GM12878 (cell line): ENCODE measurements at regions of chr2 and their contacts with region 1.

Region 1: DNA sequence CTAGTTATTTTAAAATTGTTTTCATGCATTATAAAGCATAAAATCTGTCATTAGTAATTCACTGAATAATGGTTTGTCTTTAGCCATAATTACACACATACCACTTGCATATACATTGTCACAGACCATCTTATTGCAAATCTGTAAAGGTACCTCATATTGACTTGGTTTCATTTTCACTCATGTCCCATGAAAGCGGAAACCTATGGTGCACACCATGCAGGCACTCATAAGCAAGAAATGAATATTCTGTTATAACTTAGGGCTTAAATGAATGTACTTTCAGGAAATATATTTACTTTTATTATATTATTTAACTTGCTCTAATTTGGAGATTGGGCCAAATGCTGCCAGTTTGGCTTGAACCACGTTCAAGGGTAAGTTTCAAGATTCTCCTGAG is 29.2 kb upstream of the STK17B start:
- DNase-seq: peak; percentile 83
- ATAC-seq: peak; percentile 94
- H3K4me3 ChIP-seq: no peak overlapping the region
- H3K27ac ChIP-seq: peak overlapping the region; percentile 79
- H3K4me1 ChIP-seq: peaks cover 18% of the 10 kb centered on the region
- H3K27me3 ChIP-seq: no peaks in the 10 kb centered on the region
- CTCF ChIP-seq: no peak
- EP300 ChIP-seq: peak; percentile 64 to 65
- POLR2A ChIP-seq: no peak
- RAD21 ChIP-seq: no peak

Region 2: GRCh38 chr2:196177124-196177523 is 23.4 kb before region 1 on chr2:
- CTCF ChIA-PET with region 1: interaction called, 13 read pairs
- POLR2A ChIA-PET with region 1: interaction called, 22 read pairs
- RAD21 ChIA-PET with region 1: interaction called, 39 read pairs
- SMC1A ChIA-PET with region 1: interaction called, 104 read pairs
- in situ Hi-C with region 1: no loop called
- intact Hi-C with region 1: loop called (anchors 1 kb)
- DNase-seq: no peak
- ATAC-seq: peak; percentile 6
- H3K4me3 ChIP-seq: peak overlapping the region; percentile 56; the same call in 1 of the 2 replicates
- H3K27ac ChIP-seq: peak overlapping the region; percentile 77
- H3K4me1 ChIP-seq: peaks cover 42% of the 10 kb centered on the region
- H3K27me3 ChIP-seq: no peaks in the 10 kb centered on the region
- CTCF ChIP-seq: no peak
- EP300 ChIP-seq: no peak
- POLR2A ChIP-seq: no peak
- RAD21 ChIP-seq: no peak

Region 3: GRCh38 chr2:196187898-196188458 is 12.6 kb before region 1 on chr2:
- CTCF ChIA-PET with region 1: interaction called, 13 read pairs
- POLR2A ChIA-PET with region 1: interaction called, 22 read pairs
- RAD21 ChIA-PET with region 1: interaction called, 39 read pairs
- SMC1A ChIA-PET with region 1: interaction called, 104 read pairs
- in situ Hi-C with region 1: no loop called
- intact Hi-C with region 1: loop called (anchors 1 kb)
- DNase-seq: no peak
- ATAC-seq: peak; percentile 29; the same call in 2 of the 3 replicates
- H3K4me3 ChIP-seq: no peak overlapping the region
- H3K27ac ChIP-seq: no peak overlapping the region
- H3K4me1 ChIP-seq: peaks cover 7% of the 10 kb centered on the region
- H3K27me3 ChIP-seq: no peaks in the 10 kb centered on the region
- CTCF ChIP-seq: no peak
- EP300 ChIP-seq: 0 out of 4 replicates have a peak, but pooled peaks of 1 of the 2 experiments have one; percentile 14
- POLR2A ChIP-seq: no peak
- RAD21 ChIP-seq: no peak

Region 4: DNA sequence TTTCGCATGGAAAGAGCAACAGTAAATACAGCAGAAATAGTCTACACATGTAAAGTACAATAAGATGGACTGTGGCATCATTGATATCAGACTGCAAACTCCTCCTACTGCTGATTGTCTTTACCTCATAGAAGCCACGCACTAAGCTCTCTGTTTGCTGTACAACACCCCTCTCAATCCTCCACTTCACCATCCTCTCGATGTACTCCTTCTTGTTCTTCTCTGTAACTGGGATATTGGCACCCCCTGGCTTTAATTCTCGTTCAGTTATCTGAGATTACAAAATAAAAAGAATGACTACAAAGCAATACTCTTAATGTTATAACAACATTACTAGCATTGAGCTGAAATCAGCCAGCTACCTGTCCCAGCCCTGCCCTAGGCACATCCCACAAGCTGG is 20.1 kb after region 1 on chr2:
- CTCF ChIA-PET with region 1: interaction called, 3 read pairs
- POLR2A ChIA-PET with region 1: interaction called, 4 read pairs
- RAD21 ChIA-PET with region 1: interaction called, 3 read pairs
- SMC1A ChIA-PET with region 1: interaction called, 22 read pairs
- in situ Hi-C with region 1: no loop called
- intact Hi-C with region 1: no loop called
- DNase-seq: no peak
- ATAC-seq: no peak
- H3K4me3 ChIP-seq: no peak overlapping the region
- H3K27ac ChIP-seq: no peak overlapping the region
- H3K4me1 ChIP-seq: no peaks in the 10 kb centered on the region
- H3K27me3 ChIP-seq: no peaks in the 10 kb centered on the region
- CTCF ChIP-seq: no peak; a peak in 1 of 6 replicates
- EP300 ChIP-seq: no peak
- POLR2A ChIP-seq: no peak
- RAD21 ChIP-seq: no peak

Region 5: GRCh38 chr2:196263181-196263747 is 62.7 kb after region 1 on chr2:
- CTCF ChIA-PET with region 1: no interaction called
- POLR2A ChIA-PET with region 1: no interaction called
- RAD21 ChIA-PET with region 1: interaction called, 4 read pairs
- SMC1A ChIA-PET with region 1: interaction called, 12 read pairs
- in situ Hi-C with region 1: no loop called
- intact Hi-C with region 1: no loop called
- DNase-seq: peak; percentile 88
- ATAC-seq: peak; percentile 94
- H3K4me3 ChIP-seq: 0 out of 2 replicates have a peak overlapping the region, but pooled peaks have one; percentile 7
- H3K27ac ChIP-seq: peak overlapping the region; percentile 75
- H3K4me1 ChIP-seq: peaks cover 9% of the 10 kb centered on the region
- H3K27me3 ChIP-seq: no peaks in the 10 kb centered on the region
- CTCF ChIP-seq: no peak
- EP300 ChIP-seq: peak; percentile 20 to 52; a peak in 2 of 4 replicates
- POLR2A ChIP-seq: 0 out of 2 replicates have a peak, but pooled peaks have one; percentile 31
- RAD21 ChIP-seq: no peak